Activated CD8-positive, alpha-beta T cell treated with anti-CD3 and anti-CD28 coated beads for 36 hours (primary cell): ENCODE measurements at regions of chr14 and their contacts with region 1.

Region 1: GRCh38 chr14:90399541-90400444 is 3.0 kb downstream of the CALM1 start:
- DNase-seq: peak; percentile 94
- ATAC-seq: peak; percentile 55
- H3K4me3 Mint-ChIP-seq: peak overlapping the region; percentile 94
- H3K27ac Mint-ChIP-seq: peak overlapping the region; percentile 99
- H3K4me1 Mint-ChIP-seq: peaks cover 56% of the 10 kb centered on the region
- H3K27me3 Mint-ChIP-seq: no peaks in the 10 kb centered on the region
- CTCF ChIP-seq: peak; percentile 98

Region 2: DNA sequence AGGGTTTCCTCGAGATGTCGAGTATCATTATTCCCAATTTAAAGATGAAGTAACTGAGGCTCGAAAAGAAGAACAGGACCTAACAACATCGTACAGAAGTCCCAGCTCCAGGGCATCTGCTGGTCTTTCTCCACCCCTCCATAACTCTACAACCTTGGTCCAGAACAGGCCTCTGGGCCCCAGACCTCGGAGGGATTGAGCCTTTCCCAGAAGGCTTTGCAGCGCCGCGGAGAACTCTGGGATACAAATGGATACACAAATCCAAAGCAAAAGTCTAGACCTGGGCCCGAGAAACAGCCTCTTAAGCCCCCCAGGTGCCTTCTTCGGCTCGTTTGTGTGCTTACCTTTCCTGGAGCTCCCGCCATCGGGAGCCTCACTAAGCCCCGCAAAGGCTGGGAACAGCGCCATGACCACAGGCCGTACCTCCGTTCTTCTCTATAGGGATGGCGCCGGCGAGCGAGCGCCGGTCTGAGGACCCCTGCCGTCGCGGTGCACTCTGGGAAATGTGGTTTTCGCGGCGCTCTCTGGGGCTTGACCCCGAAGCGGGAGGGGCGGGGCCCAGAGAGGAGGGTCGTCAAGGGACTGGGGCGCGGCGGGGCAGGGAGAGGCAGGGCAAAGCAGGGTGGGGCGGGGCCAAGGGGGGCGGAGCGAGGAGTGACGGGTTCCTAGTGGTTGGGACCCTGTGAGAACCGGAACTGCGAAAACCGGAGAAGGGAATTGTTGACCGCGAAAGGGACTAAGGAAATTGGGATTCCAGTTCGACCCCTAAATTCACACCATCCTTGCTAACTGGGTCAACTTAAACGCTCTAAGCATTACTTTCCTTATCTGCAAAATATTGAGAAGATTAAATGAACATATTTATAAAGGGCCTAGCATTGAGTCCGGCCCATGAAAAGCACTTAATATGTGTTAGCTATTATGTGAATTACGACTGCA is 68.0 kb before region 1 on chr14 and contains the start of gene NRDE2:
- CTCF ChIA-PET with region 1: interaction called, 4 read pairs
- POLR2A ChIA-PET with region 1: interaction called, 3 read pairs
- intact Hi-C with region 1: loop called (anchors 5 kb)
- DNase-seq: peak; percentile 99
- ATAC-seq: peak; percentile 99
- H3K4me3 Mint-ChIP-seq: peak within 1 kb of the TSS; percentile 92
- H3K27ac Mint-ChIP-seq: peak within 1 kb of the TSS; percentile 92
- H3K4me1 Mint-ChIP-seq: peaks cover 28% of the 10 kb centered on the region
- H3K27me3 Mint-ChIP-seq: peaks cover 3% of the 10 kb centered on the region
- CTCF ChIP-seq: no peak
- total RNA-seq, gene NRDE2: 19.2 to 21.0 TPM

Region 3: GRCh38 chr14:90383075-90383730 is 16.6 kb before region 1 on chr14:
- CTCF ChIA-PET with region 1: interaction called, 33 read pairs
- POLR2A ChIA-PET with region 1: interaction called, 365 read pairs
- intact Hi-C with region 1: loop called (anchors 1 kb)
- DNase-seq: peak; percentile 99
- ATAC-seq: peak; percentile 89
- H3K4me3 Mint-ChIP-seq: no peak overlapping the region
- H3K27ac Mint-ChIP-seq: no peak overlapping the region
- H3K4me1 Mint-ChIP-seq: peaks cover 18% of the 10 kb centered on the region
- H3K27me3 Mint-ChIP-seq: no peaks in the 10 kb centered on the region
- CTCF ChIP-seq: no peak

Region 4: DNA sequence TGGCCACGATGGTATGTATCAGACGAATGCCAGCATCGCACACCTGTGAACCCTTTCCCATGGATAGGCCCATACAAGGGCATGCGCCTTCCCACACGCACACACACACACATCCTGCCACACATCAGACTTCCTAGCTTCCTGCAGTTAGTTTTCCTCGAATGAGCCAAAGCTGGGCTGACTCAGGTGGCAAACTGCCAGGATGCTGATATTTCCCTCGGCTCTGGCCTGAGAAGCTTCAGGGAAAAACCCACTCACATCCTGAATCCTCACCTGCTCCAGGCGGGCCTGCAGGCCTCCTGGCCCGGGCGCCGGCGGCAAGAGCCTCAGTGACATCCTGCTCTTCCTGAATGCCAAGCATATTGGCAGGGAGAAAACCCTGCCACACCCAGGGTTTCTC is 19.4 kb after region 1 on chr14:
- CTCF ChIA-PET with region 1: interaction called, 12 read pairs
- POLR2A ChIA-PET with region 1: interaction called, 5 read pairs
- intact Hi-C with region 1: no loop called
- DNase-seq: no peak
- ATAC-seq: no peak
- H3K4me3 Mint-ChIP-seq: no peak overlapping the region
- H3K27ac Mint-ChIP-seq: no peak overlapping the region
- H3K4me1 Mint-ChIP-seq: peaks cover 3% of the 10 kb centered on the region
- H3K27me3 Mint-ChIP-seq: no peaks in the 10 kb centered on the region
- CTCF ChIP-seq: no peak

Region 5: GRCh38 chr14:90758028-90758889 is 358.5 kb after region 1 on chr14:
- CTCF ChIA-PET with region 1: interaction called, 11 read pairs
- POLR2A ChIA-PET with region 1: interaction called, 3 read pairs
- intact Hi-C with region 1: no loop called
- DNase-seq: peak; percentile 92
- ATAC-seq: peak; percentile 92
- H3K4me3 Mint-ChIP-seq: peak overlapping the region; percentile 75
- H3K27ac Mint-ChIP-seq: peak overlapping the region; percentile 77
- H3K4me1 Mint-ChIP-seq: peaks cover 15% of the 10 kb centered on the region
- H3K27me3 Mint-ChIP-seq: no peaks in the 10 kb centered on the region
- CTCF ChIP-seq: peak; percentile 73